A549 (cell line): ENCODE measurements at regions of chr7 and their contacts with region 1.

Region 1: DNA sequence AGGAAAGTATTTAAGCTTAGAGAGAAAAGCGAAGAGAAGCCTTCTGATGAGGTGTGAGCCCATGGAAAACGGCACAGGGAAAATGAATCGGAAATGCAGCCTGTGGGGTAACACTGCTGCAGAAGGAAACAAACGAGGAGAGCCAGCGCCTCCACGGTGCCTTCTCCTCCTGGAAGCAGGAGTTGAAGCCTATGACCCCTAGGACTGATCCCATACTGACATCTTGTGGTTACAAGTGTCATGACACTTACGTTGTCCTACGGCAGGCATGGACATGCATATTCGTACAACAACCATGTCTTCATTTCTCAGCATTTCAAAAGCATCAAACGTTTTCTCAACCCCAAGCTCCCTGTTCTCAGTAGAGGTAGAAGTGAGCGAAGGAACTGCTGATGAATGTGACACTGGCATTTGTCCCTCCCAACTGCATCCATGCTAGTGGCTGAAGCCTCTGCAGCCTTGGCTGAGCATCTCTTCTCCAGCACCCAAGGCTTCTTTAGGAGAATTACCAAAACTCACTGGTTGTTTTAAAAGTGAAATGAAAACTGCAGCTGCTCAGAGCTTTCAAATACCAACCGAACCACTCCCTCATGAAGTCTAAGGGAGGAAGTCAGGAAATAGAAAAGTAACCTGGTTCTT is 160.2 kb downstream of the JAZF1 start:
- DNase-seq: peak; percentile 86
- ATAC-seq: peak; percentile 96 to 98
- H3K4me3 ChIP-seq: no peak overlapping the region
- H3K27ac ChIP-seq: peak overlapping the region; percentile 66 to 78
- H3K4me1 ChIP-seq: peaks cover 20% of the 10 kb centered on the region; the same call in 2 of the 3 replicates
- CTCF ChIP-seq: peak; percentile 95
- EP300 ChIP-seq: no peak
- POLR2A ChIP-seq: no peak
- RAD21 ChIP-seq: peak; percentile 98

Region 2: GRCh38 chr7:27196287-27196767 is 824.1 kb before region 1 on chr7:
- CTCF ChIA-PET with region 1: interaction called, 23 read pairs
- POLR2A ChIA-PET with region 1: no interaction called
- DNase-seq: peak; percentile 58 to 79
- ATAC-seq: no peak
- H3K4me3 ChIP-seq: no peak overlapping the region
- H3K27ac ChIP-seq: no peak overlapping the region
- H3K4me1 ChIP-seq: peaks cover 15% of the 10 kb centered on the region
- CTCF ChIP-seq: peak; percentile 96
- EP300 ChIP-seq: no peak
- POLR2A ChIP-seq: no peak
- RAD21 ChIP-seq: peak; percentile 97 to 98

Region 3: GRCh38 chr7:27605689-27606269 is 414.6 kb before region 1 on chr7:
- CTCF ChIA-PET with region 1: interaction called, 11 read pairs
- POLR2A ChIA-PET with region 1: no interaction called
- DNase-seq: peak; percentile 22 to 55
- ATAC-seq: peak in 1 of 2 experiments; percentile 83; a peak in 4 of 6 replicates
- H3K4me3 ChIP-seq: peak overlapping the region; percentile 44
- H3K27ac ChIP-seq: peak overlapping the region; percentile 53 to 79
- H3K4me1 ChIP-seq: peaks cover 68% of the 10 kb centered on the region
- CTCF ChIP-seq: peak; percentile 84
- EP300 ChIP-seq: no peak
- POLR2A ChIP-seq: no peak
- RAD21 ChIP-seq: peak; percentile 54 to 73

Region 4: DNA sequence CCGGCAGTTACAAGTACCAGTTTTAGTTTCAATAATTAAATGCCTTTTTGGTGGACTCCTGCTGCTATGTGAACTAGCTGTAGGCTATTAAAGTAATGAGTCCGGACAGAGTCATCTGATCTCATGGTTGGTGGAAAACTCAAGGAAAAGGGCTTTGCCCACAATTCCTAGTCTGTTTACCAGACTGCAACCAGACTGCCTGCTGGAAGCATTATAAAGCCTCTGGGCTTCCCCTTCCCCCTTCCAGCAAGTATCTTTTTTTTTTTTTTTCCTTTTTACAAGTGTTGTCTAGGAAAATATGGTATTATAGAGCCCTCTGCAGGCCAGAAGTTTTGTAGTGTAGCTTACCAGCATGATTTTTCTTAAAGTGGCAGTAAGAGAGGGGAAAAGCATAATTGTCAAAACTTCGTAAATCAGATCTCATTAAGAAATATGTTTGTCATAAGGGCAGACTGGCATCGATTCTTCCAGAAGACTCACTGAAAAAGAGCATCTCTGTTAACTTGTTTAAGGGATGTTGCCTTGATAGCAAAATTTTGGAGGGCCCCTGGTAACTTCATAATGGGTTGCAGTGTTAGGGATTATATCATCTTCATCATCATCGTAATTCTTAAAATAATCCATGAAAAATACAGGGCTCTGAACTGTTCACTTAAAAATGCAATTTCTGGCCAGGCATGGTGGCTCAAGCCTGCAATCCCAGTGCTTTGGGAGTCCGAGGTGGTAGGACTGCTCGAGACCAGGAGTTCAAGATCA is 99.2 kb before region 1 on chr7:
- CTCF ChIA-PET with region 1: interaction called, 13 read pairs
- POLR2A ChIA-PET with region 1: no interaction called
- DNase-seq: peak; percentile 49 to 82
- ATAC-seq: peak; percentile 79 to 90
- H3K4me3 ChIP-seq: 0 out of 3 replicates have a peak overlapping the region, but pooled peaks have one; percentile 1
- H3K27ac ChIP-seq: peak overlapping the region; percentile 43 to 71; a peak in 5 of 6 replicates
- H3K4me1 ChIP-seq: peaks cover 37% of the 10 kb centered on the region
- CTCF ChIP-seq: peak; percentile 84
- EP300 ChIP-seq: no peak
- POLR2A ChIP-seq: no peak
- RAD21 ChIP-seq: peak; percentile 88 to 94

Region 5: GRCh38 chr7:28005075-28005846 is 15.2 kb before region 1 on chr7:
- CTCF ChIA-PET with region 1: interaction called, 17 read pairs
- POLR2A ChIA-PET with region 1: no interaction called
- DNase-seq: no peak
- ATAC-seq: no peak
- H3K4me3 ChIP-seq: no peak overlapping the region
- H3K27ac ChIP-seq: no peak overlapping the region
- H3K4me1 ChIP-seq: no peaks in the 10 kb centered on the region; the same call in 2 of the 3 replicates
- CTCF ChIP-seq: no peak
- EP300 ChIP-seq: no peak
- POLR2A ChIP-seq: no peak
- RAD21 ChIP-seq: no peak

Region 6: GRCh38 chr7:28069807-28070206 is 49.4 kb after region 1 on chr7:
- CTCF ChIA-PET with region 1: interaction called, 27 read pairs
- POLR2A ChIA-PET with region 1: no interaction called
- DNase-seq: no peak
- ATAC-seq: no peak
- H3K4me3 ChIP-seq: no peak overlapping the region
- H3K27ac ChIP-seq: peak overlapping the region; percentile 22 to 65; a peak in 4 of 6 replicates
- H3K4me1 ChIP-seq: peaks cover 40% of the 10 kb centered on the region
- CTCF ChIP-seq: no peak
- EP300 ChIP-seq: no peak
- POLR2A ChIP-seq: no peak
- RAD21 ChIP-seq: no peak

Region 7: DNA sequence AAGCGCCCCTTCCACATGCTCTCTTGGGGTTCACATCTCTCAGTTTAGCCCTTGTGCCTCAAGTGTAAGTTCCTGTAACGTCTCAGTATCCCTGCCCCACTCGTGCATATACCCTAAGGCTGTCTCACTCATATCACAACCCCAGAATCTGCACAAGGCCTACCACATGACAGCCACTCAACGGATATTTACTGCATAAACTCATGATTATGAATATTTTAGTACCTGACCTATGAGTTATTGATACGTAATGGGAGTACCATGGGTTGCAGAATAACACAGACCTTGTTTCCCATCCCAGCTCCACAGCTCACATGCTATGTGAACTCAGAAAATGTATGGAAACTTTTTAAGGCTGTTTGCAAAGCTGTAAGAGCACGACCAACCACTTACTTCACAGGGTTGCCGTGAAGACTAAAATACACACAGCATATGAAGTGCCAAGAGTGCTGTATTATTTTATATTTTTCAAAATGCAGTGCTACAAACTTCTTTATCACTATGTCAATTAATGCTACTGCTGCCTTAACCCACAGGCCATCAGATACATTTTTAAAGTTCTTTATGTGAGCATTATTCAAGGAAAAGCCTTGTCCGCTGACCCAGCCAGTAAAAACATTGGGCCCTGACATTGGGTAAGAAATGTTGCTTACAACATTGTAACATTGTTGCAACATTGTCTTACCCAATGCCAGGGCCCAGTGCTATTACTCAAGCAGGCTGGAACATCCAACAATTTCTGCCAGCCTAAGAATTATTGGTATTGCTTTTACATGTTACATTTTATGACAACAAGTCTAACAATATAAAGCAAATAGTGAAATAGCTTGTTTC is 63.0 kb after region 1 on chr7:
- CTCF ChIA-PET with region 1: interaction called, 27 read pairs
- POLR2A ChIA-PET with region 1: no interaction called
- DNase-seq: peak in 1 of 2 experiments; percentile 31
- ATAC-seq: peak; percentile 40 to 70; a peak in 3 of 6 replicates
- H3K4me3 ChIP-seq: no peak overlapping the region
- H3K27ac ChIP-seq: peak overlapping the region; percentile 55 to 64; a peak in 4 of 6 replicates
- H3K4me1 ChIP-seq: peaks cover 18% of the 10 kb centered on the region
- CTCF ChIP-seq: no peak
- EP300 ChIP-seq: peak in 1 of 2 experiments; percentile 56; a peak in 2 of 5 replicates
- POLR2A ChIP-seq: no peak
- RAD21 ChIP-seq: no peak